Activated naive CD4-positive, alpha-beta T cell treated with anti-CD3 and anti-CD28 coated beads for 36 hours (primary cell): ENCODE measurements at regions of chr3 and their contacts with region 1.

Region 1: DNA sequence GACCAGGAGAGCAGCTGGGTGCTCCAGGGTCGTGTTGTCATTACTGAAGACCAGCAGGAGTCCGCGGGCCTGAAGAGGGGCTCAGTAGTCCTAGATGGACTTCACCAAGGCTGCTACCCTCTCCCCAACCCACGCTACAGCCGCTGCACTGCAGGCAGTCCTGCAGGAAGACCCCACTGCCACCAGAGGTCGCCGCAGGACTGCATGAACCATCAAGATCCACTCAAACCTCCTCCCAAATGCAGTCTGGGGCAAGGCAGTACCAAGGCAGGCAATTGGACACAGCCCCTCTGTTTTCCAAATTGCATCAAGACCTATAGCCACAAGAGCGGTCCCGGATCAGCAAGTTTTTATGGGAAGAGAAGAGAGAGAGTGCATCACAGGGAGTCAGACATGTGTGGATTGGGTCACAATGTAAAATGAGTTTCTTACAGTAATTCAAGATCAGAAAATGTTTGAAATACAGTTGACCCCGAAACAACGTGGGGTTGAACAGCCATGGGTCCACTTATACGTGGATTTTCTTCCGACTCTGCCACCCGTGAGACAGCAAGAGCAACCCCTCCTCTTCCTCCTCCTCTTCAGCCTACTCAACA is 46.7 kb downstream of the DZIP1L start:
- DNase-seq: peak; percentile 87
- H3K4me3 Mint-ChIP-seq: no peak overlapping the region
- H3K27ac Mint-ChIP-seq: no peak overlapping the region
- H3K4me1 Mint-ChIP-seq: peaks cover 6% of the 10 kb centered on the region
- H3K27me3 Mint-ChIP-seq: peaks cover 10% of the 10 kb centered on the region

Region 2: GRCh38 chr3:137852411-137852830 is 216.3 kb before region 1 on chr3:
- CTCF ChIA-PET with region 1: no interaction called
- intact Hi-C with region 1: no loop called
- DNase-seq: no peak
- H3K4me3 Mint-ChIP-seq: no peak overlapping the region
- H3K27ac Mint-ChIP-seq: no peak overlapping the region
- H3K4me1 Mint-ChIP-seq: no peaks in the 10 kb centered on the region
- H3K27me3 Mint-ChIP-seq: peaks cover 8% of the 10 kb centered on the region

Region 3: GRCh38 chr3:138113326-138113725 is 44.6 kb after region 1 on chr3:
- CTCF ChIA-PET with region 1: interaction called, 153 read pairs
- intact Hi-C with region 1: no loop called
- DNase-seq: no peak
- H3K4me3 Mint-ChIP-seq: no peak overlapping the region
- H3K27ac Mint-ChIP-seq: no peak overlapping the region
- H3K4me1 Mint-ChIP-seq: peaks cover 5% of the 10 kb centered on the region
- H3K27me3 Mint-ChIP-seq: peaks cover 44% of the 10 kb centered on the region

Region 4: GRCh38 chr3:138174421-138175122 is 105.9 kb after region 1 on chr3 and contains the start of gene DBR1:
- CTCF ChIA-PET with region 1: interaction called, 4 read pairs
- intact Hi-C with region 1: loop called (anchors 2 kb)
- DNase-seq: peak; percentile 89
- H3K4me3 Mint-ChIP-seq: peak within 1 kb of the TSS; percentile 97
- H3K27ac Mint-ChIP-seq: peak within 1 kb of the TSS; percentile 97
- H3K4me1 Mint-ChIP-seq: peaks cover 37% of the 10 kb centered on the region
- H3K27me3 Mint-ChIP-seq: no peaks in the 10 kb centered on the region
- total RNA-seq, gene DBR1: 20.0 to 22.3 TPM

Region 5: DNA sequence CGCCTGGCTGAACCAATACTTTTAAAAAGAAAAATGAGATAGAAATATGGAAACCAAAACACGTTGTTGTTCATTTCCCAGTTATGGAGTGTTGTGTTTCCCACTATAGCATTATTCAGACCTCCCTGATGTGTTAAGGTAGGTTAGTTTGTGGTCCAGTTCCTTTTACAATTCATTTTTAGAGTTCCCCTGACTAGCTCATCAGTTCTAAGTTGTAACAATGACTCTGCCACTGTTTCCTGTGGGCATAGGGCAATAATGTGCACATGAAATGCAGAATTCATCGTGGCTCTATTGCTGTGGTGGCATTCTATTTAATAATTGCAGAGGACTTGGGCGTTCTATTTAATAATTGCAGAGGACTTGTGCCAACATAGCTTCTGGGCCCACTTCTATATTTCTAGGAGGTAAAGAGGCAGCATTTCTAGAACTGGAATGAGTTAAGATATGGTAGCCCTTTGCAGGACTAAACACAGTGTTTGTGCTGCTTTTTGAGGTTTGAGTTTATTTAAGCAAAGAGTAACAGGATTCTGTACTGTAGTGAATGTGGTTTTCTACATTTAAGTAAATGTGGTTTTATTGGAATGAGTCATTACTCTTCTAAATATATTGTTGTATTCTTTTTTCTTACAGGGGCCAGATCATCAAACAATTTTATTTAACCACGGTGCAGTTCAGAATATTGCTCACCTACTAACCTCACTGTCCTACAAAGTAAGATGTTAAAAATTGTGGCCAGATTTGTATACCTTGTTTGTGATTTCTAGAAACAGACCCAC is 165.9 kb after region 1 on chr3:
- CTCF ChIA-PET with region 1: no interaction called
- intact Hi-C with region 1: no loop called
- DNase-seq: no peak
- H3K4me3 Mint-ChIP-seq: no peak overlapping the region
- H3K27ac Mint-ChIP-seq: no peak overlapping the region
- H3K4me1 Mint-ChIP-seq: peaks cover 25% of the 10 kb centered on the region
- H3K27me3 Mint-ChIP-seq: no peaks in the 10 kb centered on the region

Region 6: GRCh38 chr3:138296639-138297038 is 228.0 kb after region 1 on chr3:
- CTCF ChIA-PET with region 1: no interaction called
- intact Hi-C with region 1: loop called (anchors 10 kb)
- DNase-seq: peak; percentile 74
- H3K4me3 Mint-ChIP-seq: peak overlapping the region; percentile 15
- H3K27ac Mint-ChIP-seq: peak overlapping the region; percentile 88
- H3K4me1 Mint-ChIP-seq: peaks cover 38% of the 10 kb centered on the region
- H3K27me3 Mint-ChIP-seq: no peaks in the 10 kb centered on the region